ENCODE measurements at regions of chr18 and their contacts with region 1.

Region 1: GRCh38 chr18:63299837-63300745 is 19.5 kb downstream of the BCL2 start:
- DNase-seq: peak; percentile 81
- H3K4me3 Mint-ChIP-seq: peak overlapping the region; percentile 81
- H3K27ac Mint-ChIP-seq: peak overlapping the region; percentile 98
- H3K4me1 Mint-ChIP-seq: peaks cover 81% of the 10 kb centered on the region
- H3K27me3 Mint-ChIP-seq: no peaks in the 10 kb centered on the region

Region 2: DNA sequence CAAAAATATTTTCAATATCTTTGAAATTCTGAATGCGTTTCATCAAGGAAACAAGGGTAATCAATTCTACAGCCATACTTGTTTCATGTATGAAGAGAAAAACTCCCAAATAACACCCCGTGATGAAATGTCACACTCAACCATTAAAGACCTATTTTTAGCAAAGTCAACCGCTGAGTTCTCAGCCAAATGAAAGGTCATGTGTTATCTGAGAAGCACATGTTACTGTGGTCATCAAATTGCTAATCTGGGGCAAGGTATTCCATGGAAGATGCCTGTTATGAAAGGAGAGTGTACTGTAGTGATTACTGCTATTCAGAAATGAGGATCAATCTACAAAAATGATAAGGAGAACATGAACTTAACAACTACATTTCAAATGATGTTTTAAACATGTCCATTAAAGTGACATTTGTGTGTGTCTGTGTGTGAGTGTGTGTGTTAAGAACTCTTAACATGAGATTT is 107.2 kb before region 1 on chr18:
- intact Hi-C with region 1: no loop called
- DNase-seq: no peak
- H3K4me3 Mint-ChIP-seq: no peak overlapping the region
- H3K27ac Mint-ChIP-seq: peak overlapping the region; percentile 45
- H3K4me1 Mint-ChIP-seq: peaks cover 46% of the 10 kb centered on the region
- H3K27me3 Mint-ChIP-seq: no peaks in the 10 kb centered on the region

Region 3: DNA sequence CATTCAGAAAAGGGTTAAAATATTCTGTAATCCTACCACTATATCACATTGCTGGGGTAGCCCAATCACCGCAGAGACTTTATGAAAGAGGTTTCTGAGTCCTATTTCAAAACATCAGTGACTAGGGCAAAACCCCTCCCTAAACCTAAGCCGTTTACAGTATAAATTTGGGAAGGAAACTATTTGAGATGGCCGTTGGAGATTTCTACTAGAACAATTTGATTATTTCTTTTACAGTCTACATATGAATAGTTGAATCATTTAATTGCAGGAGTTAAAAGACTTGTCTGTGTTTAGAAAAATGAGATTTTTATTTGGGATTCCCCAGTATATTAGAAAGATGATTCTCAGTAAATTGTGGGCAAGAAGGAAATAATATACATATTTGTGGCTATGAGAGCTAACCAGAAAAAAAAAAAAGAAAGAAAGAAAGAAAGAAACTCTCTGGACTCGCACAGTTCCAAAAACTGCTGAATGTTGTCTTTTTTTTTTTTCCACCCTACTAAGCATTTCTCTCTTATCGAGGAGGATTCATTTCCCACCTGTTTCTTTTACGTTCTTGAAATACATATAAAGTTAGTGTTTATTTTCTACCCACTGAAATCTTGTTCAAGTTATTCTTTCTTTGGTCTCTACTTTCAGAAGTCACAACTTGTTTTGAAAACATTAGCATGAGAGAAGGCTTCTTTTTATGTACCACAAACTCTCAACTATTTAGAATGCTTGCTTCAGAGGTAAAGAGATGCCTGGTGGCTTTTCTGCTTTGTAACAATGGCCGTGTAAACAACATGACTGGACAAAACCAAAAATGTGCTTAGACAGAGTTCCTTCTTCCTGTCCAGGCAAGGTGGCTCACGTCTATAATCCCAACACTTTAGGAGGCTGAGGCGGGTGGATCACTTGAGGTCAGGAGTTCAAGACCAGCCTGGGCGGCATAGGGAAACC is 46.4 kb before region 1 on chr18:
- intact Hi-C with region 1: loop called (anchors 5 kb)
- DNase-seq: no peak
- H3K4me3 Mint-ChIP-seq: peak overlapping the region; percentile 29
- H3K27ac Mint-ChIP-seq: peak overlapping the region; percentile 64
- H3K4me1 Mint-ChIP-seq: peaks cover 68% of the 10 kb centered on the region
- H3K27me3 Mint-ChIP-seq: no peaks in the 10 kb centered on the region

Region 4: DNA sequence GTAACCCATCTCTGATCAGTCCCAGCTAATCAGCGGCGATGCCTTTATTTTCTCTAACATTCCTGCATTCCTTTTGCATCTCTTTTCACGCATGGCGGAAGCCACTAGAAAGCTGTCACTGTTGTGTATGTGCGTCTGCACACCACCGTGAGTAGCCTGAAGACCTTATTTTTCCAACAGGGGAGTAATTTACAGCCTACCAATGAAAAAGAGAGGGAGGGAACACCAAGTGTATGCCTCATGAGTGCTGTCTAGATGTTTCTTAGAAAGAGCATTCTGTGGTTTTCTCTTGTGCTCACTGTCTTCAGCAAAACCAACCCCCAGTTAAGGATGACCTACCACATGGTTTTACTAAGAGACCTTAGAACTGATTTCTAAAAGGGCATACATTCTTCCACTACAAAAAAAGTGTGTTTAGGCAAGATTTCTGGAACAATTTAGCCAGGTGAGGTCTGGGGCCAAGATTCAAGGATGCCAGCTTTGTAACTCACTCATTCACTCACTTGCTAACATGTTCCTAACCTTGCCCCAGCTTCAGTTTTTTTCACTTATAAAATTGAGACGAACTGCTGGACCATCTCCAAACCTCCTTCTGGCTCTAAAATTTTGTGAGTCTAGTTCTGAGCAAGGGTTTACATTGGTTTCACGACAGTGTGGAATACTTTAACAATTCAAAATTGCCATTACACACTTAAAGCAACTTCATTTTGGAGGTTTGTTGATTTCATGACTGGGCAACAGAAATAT is 31.9 kb before region 1 on chr18:
- intact Hi-C with region 1: loop called (anchors 1 kb)
- DNase-seq: peak; percentile 72
- H3K4me3 Mint-ChIP-seq: peak overlapping the region; percentile 41
- H3K27ac Mint-ChIP-seq: peak overlapping the region; percentile 61
- H3K4me1 Mint-ChIP-seq: peaks cover 65% of the 10 kb centered on the region
- H3K27me3 Mint-ChIP-seq: no peaks in the 10 kb centered on the region

Region 5: DNA sequence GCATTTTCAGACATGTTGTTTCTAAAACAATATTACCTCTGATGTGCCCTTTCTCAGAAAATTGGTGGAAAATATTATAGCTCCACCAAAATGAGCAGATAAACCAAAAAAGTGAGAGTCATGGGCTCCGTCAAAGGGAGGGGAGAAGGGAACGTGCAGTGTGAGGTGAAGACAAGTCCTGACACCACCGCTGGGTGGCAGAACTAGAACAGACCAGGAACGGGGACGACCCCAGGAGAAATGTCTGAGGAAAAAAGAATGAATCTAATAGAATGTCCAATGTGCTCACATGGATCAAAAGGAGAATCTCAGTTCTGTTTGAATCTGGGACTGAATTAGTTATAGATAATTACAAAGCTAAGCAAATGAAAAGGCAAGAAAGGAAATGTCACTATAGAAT is 42.1 kb after region 1 on chr18:
- intact Hi-C with region 1: no loop called
- DNase-seq: no peak
- H3K4me3 Mint-ChIP-seq: no peak overlapping the region
- H3K27ac Mint-ChIP-seq: no peak overlapping the region
- H3K4me1 Mint-ChIP-seq: peaks cover 9% of the 10 kb centered on the region
- H3K27me3 Mint-ChIP-seq: no peaks in the 10 kb centered on the region

Measured in activated CD4-positive, alpha-beta T cell treated with anti-CD3 and anti-CD28 coated beads, Interleukin-2, amount 10 ng/mL, durations not matched to agents 24 days and 14 days (primary cell).